ENCODE measurements at regions of chr13 and their contacts with region 1.

Region 1: GRCh38 chr13:87671031-87671752 is at the start of gene SLITRK5:
- DNase-seq: no peak
- ATAC-seq: peak; percentile 99
- H3K4me3 ChIP-seq: no peak within 1 kb of the TSS
- H3K27ac ChIP-seq: no peak within 1 kb of the TSS
- H3K4me1 ChIP-seq: no peaks in the 10 kb centered on the region
- H3K27me3 ChIP-seq: no peaks in the 10 kb centered on the region; a peak in 2 of 4 replicates
- CTCF ChIP-seq: peak; percentile 63 to 83 (median 75)
- EP300 ChIP-seq: no peak
- POLR2A ChIP-seq: no peak
- RAD21 ChIP-seq: peak; percentile 25; the same call in 1 of the 2 replicates
- polyA plus RNA-seq, gene SLITRK5: not detected

Region 2: DNA sequence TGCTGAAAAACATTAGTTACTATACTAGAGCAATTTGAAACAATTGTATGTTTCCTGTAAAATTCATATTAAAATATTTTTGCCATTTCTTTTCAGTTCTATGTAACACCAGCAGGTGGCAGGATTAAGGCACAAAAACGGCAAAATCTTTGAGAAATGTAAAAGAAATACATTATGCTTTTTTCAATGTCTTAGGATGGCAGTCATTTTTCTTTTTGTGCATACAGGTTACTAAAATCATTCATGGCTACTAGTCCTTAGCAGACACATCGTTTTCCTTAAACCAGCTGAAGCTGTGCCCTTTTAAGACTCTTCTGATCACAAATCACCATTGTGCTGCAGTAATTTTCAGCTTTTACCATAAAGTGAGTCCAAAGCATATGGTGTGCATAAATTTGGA is 800.7 kb before region 1 on chr13:
- CTCF ChIA-PET with region 1: interaction called, 4 read pairs
- POLR2A ChIA-PET with region 1: no interaction called
- RAD21 ChIA-PET with region 1: no interaction called
- SMC1A ChIA-PET with region 1: interaction called, 3 read pairs
- in situ Hi-C with region 1: loop called (anchors 25 kb)
- intact Hi-C with region 1: no loop called
- DNase-seq: no peak
- ATAC-seq: no peak
- H3K4me3 ChIP-seq: no peak overlapping the region
- H3K27ac ChIP-seq: no peak overlapping the region
- H3K4me1 ChIP-seq: no peaks in the 10 kb centered on the region
- H3K27me3 ChIP-seq: no peaks in the 10 kb centered on the region
- CTCF ChIP-seq: peak; percentile 35 to 50 (median 37); a peak in 5 of 6 replicates
- EP300 ChIP-seq: no peak
- POLR2A ChIP-seq: no peak
- RAD21 ChIP-seq: peak; percentile 57

Region 3: DNA sequence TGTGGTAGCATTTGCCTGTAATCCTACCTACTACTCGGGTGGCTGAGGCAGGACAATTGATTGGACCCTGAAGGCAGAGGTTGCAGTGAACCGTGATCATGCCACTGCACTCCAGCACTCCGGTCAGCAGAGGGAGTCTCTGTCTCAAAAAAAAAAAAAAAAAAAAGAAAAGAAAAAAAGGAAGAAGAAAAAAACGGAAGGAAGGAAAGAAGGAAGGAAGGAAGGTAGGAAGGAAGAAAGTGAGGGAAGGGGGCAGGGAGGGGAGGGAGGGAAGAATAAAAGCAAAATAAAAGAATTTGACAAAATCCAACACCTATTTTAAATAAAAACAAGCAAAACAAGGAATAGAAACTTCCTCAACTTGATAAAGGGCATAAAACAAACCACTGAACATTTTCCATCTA is 411.6 kb before region 1 on chr13:
- CTCF ChIA-PET with region 1: interaction called, 4 read pairs
- POLR2A ChIA-PET with region 1: no interaction called
- RAD21 ChIA-PET with region 1: no interaction called
- SMC1A ChIA-PET with region 1: no interaction called
- in situ Hi-C with region 1: no loop called
- intact Hi-C with region 1: loop called (anchors 5 kb)
- DNase-seq: no peak
- ATAC-seq: peak; percentile 61
- H3K4me3 ChIP-seq: no peak overlapping the region
- H3K27ac ChIP-seq: no peak overlapping the region
- H3K4me1 ChIP-seq: no peaks in the 10 kb centered on the region
- H3K27me3 ChIP-seq: no peaks in the 10 kb centered on the region
- CTCF ChIP-seq: peak in 1 of 3 experiments; percentile 38; a peak in 2 of 6 replicates
- EP300 ChIP-seq: no peak
- POLR2A ChIP-seq: no peak
- RAD21 ChIP-seq: no peak

Region 4: DNA sequence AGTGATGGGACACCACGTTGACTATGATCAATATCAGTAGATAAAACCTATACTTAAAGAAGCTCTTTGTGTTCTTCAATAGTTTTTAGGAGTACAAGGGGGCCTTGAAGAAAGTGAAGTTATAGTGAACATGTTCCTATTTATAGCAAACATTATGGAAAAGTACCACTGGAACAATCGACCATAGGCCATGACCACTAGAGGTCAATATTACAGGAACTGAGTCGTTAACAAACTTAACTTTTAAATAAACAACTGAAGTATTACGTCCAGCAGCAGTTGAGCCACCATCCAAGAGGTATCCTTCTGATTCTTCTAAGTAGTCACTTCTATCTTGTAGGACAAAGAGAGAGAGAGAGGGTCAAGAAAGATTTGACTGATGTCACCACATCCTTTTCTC is 391.1 kb before region 1 on chr13:
- CTCF ChIA-PET with region 1: interaction called, 11 read pairs
- POLR2A ChIA-PET with region 1: no interaction called
- RAD21 ChIA-PET with region 1: interaction called, 3 read pairs
- SMC1A ChIA-PET with region 1: interaction called, 6 read pairs
- in situ Hi-C with region 1: no loop called
- intact Hi-C with region 1: no loop called
- DNase-seq: no peak
- ATAC-seq: no peak
- H3K4me3 ChIP-seq: no peak overlapping the region
- H3K27ac ChIP-seq: no peak overlapping the region
- H3K4me1 ChIP-seq: no peaks in the 10 kb centered on the region
- H3K27me3 ChIP-seq: no peaks in the 10 kb centered on the region
- CTCF ChIP-seq: no peak
- EP300 ChIP-seq: no peak
- POLR2A ChIP-seq: no peak
- RAD21 ChIP-seq: no peak

Region 5: GRCh38 chr13:87684850-87685735 is 13.9 kb after region 1 on chr13:
- CTCF ChIA-PET with region 1: no interaction called
- POLR2A ChIA-PET with region 1: no interaction called
- RAD21 ChIA-PET with region 1: no interaction called
- SMC1A ChIA-PET with region 1: no interaction called
- in situ Hi-C with region 1: no loop called
- intact Hi-C with region 1: no loop called
- DNase-seq: no peak
- ATAC-seq: no peak
- H3K4me3 ChIP-seq: no peak overlapping the region
- H3K27ac ChIP-seq: no peak overlapping the region
- H3K4me1 ChIP-seq: no peaks in the 10 kb centered on the region
- H3K27me3 ChIP-seq: no peaks in the 10 kb centered on the region
- CTCF ChIP-seq: no peak
- EP300 ChIP-seq: no peak
- POLR2A ChIP-seq: no peak
- RAD21 ChIP-seq: no peak

Measured in GM12878 (cell line).